Activated naive CD4-positive, alpha-beta T cell treated with anti-CD3 and anti-CD28 coated beads, Interleukin-2, amount 10 ng/mL, durations not matched to agents 7 days and 5 days (primary cell): ENCODE measurements at regions of chr9 and their contacts with region 1.

Region 1: GRCh38 chr9:131762356-131762932 is 22.6 kb upstream of the RAPGEF1 start:
- DNase-seq: peak; percentile 80
- H3K4me3 Mint-ChIP-seq: no peak overlapping the region
- H3K27ac Mint-ChIP-seq: no peak overlapping the region
- H3K4me1 Mint-ChIP-seq: no peaks in the 10 kb centered on the region
- H3K27me3 Mint-ChIP-seq: peaks cover 68% of the 10 kb centered on the region

Region 2: GRCh38 chr9:132169672-132170392 is 407.4 kb after region 1 on chr9:
- CTCF ChIA-PET with region 1: interaction called, 10 read pairs
- DNase-seq: peak; percentile 66
- H3K4me3 Mint-ChIP-seq: no peak overlapping the region
- H3K27ac Mint-ChIP-seq: no peak overlapping the region
- H3K4me1 Mint-ChIP-seq: no peaks in the 10 kb centered on the region
- H3K27me3 Mint-ChIP-seq: peaks cover 83% of the 10 kb centered on the region

Region 3: DNA sequence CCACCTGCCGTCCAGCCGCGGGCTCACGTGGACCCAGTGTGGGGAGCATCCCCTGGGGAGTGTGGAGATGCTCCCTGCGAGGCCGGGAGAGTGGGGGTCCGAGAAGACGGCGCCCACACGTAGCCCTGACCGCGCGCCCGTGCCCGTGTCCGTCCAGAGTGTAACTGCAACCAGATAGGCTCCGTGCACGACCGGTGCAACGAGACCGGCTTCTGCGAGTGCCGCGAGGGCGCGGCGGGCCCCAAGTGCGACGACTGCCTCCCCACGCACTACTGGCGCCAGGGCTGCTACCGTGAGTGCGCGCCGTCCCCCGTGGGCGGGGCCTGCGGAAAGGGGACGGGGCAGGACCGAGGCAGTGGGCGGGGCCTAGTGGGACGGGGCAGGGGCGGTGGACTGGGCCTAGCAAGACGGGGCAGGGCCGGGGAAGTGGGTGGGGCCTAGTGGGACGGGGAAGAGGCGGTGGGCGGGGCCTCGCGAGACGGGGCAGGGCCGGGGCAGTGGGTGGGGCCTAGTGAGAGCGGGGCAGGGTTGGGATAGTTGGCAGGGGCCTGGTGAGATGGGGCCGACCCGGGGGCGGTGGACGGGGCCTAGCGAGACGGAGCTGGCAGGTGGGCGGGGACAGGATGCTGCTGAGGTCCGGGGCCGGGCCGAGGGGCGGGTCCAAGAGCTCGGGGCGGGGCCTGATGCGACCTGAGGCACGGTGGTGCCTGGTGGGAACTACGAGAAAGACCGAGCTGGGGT is 478.5 kb after region 1 on chr9:
- CTCF ChIA-PET with region 1: interaction called, 33 read pairs
- DNase-seq: peak; percentile 100
- H3K4me3 Mint-ChIP-seq: peak overlapping the region; percentile 92
- H3K27ac Mint-ChIP-seq: peak overlapping the region; percentile 84
- H3K4me1 Mint-ChIP-seq: peaks cover 30% of the 10 kb centered on the region
- H3K27me3 Mint-ChIP-seq: peaks cover 92% of the 10 kb centered on the region

Region 4: GRCh38 chr9:132249123-132249522 is 486.7 kb after region 1 on chr9:
- CTCF ChIA-PET with region 1: interaction called, 48 read pairs
- DNase-seq: no peak
- H3K4me3 Mint-ChIP-seq: no peak overlapping the region
- H3K27ac Mint-ChIP-seq: no peak overlapping the region
- H3K4me1 Mint-ChIP-seq: no peaks in the 10 kb centered on the region
- H3K27me3 Mint-ChIP-seq: peaks cover 54% of the 10 kb centered on the region